ENCODE measurements at regions of chr9 and their contacts with region 1.

Region 1: DNA sequence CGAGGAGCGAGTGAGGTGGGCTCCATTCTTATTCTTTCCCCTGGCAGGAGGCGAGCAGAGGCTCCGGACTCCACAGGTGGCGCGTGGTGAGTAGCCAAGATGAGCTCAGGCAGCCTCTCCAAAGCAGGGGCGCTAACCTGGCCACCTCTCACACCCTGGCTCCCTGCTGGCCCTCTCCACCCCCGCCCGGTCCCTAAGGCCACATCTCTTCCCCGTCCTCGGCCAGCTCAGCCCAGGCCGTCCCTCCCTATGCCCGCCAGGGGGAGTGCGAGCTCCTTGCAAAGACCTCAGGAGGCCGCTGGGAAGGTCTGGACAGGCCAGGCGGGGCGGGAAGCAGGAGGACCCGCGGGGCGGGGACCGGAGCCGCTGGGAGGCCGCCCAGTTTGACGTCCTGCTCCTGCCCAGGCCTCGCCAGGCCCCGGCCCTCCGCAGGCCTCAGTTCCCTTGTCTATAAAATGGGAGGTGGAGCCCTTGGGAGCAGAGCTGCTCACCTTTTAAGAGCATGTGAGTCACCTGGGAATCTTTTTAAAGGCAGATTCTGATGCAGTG is 46.3 kb upstream of the GGTA1 start:
- DNase-seq: peak; percentile 83 to 98
- H3K4me3 ChIP-seq: peak overlapping the region; percentile 27 to 44
- H3K27ac ChIP-seq: no peak overlapping the region
- H3K4me1 ChIP-seq: peaks cover 4 to 7% of the 10 kb centered on the region in 2 donors
- H3K27me3 ChIP-seq: no peaks in the 10 kb centered on the region
- CTCF ChIP-seq: peak; percentile 95 to 96 (median 95)

Region 2: DNA sequence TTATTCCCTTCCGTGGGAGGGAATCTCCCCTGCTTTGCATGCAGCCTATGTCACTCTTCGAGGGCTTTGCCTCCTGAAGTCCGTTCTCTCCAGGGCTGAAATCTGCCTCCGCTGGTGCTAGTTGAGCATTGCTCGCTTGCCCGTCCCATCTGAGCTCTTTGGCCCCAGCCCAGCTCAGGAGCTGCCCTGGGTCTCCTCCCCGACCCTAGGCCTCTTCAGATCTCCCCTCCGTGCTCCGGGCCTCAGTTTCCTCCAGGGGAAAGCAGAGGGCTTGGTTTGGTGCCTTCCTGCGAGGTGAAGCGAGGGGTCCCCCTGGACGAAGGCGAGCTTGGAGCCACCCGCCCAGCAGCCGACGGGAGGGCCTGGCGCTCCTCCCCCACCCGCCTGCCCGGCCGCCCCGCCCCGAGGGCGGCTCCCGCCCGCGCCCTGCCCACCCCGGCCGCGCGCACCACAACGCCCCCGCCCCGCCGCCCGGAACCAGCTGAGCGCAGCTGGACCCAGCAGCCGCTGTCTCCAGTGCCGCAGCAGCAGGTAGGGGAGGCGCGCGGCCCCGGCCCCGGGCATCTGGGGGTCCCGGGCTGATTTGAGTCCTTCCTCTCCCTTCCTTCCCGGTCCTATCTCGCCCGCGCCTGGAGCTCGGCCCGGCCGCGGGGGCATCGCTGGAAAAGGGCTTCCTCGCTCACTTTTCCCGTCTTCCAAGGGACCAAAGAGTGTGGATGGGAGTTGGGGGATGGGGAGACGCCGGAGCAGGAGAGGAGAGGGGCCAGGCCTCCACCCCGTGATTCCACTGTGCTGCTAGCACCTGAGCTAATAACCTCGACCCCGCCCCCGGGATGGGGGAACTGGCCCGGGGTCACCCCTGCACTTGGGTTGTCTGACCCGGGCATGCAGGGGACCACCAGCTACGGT is 278.0 kb before region 1 on chr9 and contains the start of gene GSN:
- intact Hi-C with region 1: no loop called
- DNase-seq: peak in 1 of 2 donors; percentile 91
- H3K4me3 ChIP-seq: peak within 1 kb of the TSS; percentile 90 to 99
- H3K27ac ChIP-seq: peak within 1 kb of the TSS; percentile 98 to 99
- H3K4me1 ChIP-seq: peaks cover 23 to 36% of the 10 kb centered on the region in 2 donors
- H3K27me3 ChIP-seq: no peaks in the 10 kb centered on the region
- CTCF ChIP-seq: peak in 1 of 3 experiments; percentile 33
- total RNA-seq, gene GSN: 3,012 TPM

Region 3: DNA sequence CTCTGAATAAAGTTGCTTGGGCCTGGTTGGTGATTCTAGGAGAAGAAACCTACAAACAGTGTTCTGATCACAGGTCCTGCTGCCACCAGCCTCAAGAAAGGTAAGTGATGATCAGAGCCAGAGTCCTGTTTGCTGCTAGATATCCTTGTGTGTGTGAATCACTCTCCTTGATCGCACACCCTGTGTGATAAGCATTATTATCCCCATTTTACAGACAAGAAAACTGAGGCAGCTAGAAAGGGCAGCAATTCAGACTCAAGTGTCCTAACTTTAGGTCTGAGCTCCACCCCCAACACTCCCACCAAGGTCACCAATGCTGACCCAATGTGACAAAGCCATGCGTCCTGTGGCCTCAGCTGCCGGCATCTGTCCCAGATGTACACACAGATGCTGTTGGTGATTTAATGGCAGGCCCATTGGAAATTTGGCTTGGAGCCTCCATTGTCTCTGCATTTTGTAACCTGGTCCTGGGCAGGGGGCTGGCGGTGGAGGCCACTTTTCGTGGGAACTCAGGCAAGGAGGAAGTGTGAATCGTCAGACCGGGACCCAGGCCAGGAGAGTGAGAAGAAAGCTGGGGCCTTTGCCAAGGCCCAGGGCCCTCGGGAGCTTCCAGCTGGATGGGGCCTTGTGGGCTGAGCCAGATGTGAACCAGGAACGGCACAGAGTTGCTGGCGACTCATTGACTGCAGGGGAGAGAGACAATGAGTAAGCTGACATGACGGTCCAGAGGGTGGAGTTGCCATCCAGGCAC is 16.5 kb before region 1 on chr9:
- intact Hi-C with region 1: no loop called
- DNase-seq: peak; percentile 82 to 97
- H3K4me3 ChIP-seq: no peak overlapping the region
- H3K27ac ChIP-seq: peak overlapping the region; percentile 39 to 65
- H3K4me1 ChIP-seq: peaks cover 0 to 10% of the 10 kb centered on the region in 2 donors
- H3K27me3 ChIP-seq: no peaks in the 10 kb centered on the region
- CTCF ChIP-seq: no peak

Region 4: DNA sequence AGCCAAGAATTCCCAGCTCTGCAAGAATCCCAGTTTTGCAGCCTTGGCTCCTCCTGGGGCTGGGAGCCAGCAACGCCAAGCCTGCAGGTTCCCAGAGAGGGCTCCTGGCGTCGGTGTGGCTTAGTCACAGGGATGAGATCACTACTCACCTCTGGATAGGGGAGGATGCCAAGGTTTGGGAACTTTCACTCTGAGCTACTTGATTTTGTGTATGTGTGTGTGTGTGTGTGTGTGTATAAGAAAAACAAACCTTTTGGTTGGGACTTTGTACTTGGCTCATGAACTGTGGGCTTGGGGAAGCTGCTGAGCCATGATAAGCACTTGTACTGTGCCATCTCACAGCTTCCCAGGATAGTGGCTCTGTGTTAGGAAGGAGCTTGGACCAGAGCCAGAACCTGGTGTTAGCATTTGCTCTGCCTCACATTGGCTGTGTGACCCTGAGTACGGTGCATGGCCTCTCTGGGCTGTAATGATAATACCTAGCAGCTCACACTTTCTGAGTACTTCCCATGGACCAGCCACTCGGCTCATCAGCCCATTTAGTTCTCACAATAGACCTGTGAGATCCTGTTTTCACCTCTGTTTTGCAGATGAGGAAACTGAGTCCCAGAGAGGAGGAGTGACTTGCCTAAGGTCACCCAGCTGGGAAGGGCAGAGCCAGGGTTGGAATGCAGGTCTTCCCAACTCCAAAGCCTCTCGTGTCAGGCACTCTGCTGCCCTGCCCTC is 64.1 kb after region 1 on chr9:
- intact Hi-C with region 1: loop called (anchors 2 kb)
- DNase-seq: peak; percentile 19 to 82
- H3K4me3 ChIP-seq: no peak overlapping the region
- H3K27ac ChIP-seq: peak overlapping the region; percentile 6 to 52
- H3K4me1 ChIP-seq: peaks cover 13 to 33% of the 10 kb centered on the region in 2 donors
- H3K27me3 ChIP-seq: no peaks in the 10 kb centered on the region
- CTCF ChIP-seq: no peak

Region 5: GRCh38 chr9:121686930-121687541 is 141.1 kb after region 1 on chr9:
- intact Hi-C with region 1: loop called (anchors 1 kb)
- DNase-seq: peak; percentile 45 to 85
- H3K4me3 ChIP-seq: no peak overlapping the region
- H3K27ac ChIP-seq: no peak overlapping the region
- H3K4me1 ChIP-seq: peaks cover 0 to 2% of the 10 kb centered on the region in 2 donors
- H3K27me3 ChIP-seq: no peaks in the 10 kb centered on the region
- CTCF ChIP-seq: peak; percentile 79 to 95 (median 85)

Region 6: GRCh38 chr9:121992571-121993212 is 446.7 kb after region 1 on chr9:
- intact Hi-C with region 1: loop called (anchors 2 kb)
- DNase-seq: peak in 1 of 2 donors; percentile 76
- H3K4me3 ChIP-seq: no peak overlapping the region
- H3K27ac ChIP-seq: no peak overlapping the region
- H3K4me1 ChIP-seq: peaks cover 0 to 1% of the 10 kb centered on the region in 2 donors
- H3K27me3 ChIP-seq: no peaks in the 10 kb centered on the region
- CTCF ChIP-seq: peak; percentile 75 to 79 (median 78)

Region 7: GRCh38 chr9:122092611-122093506 is 546.9 kb after region 1 on chr9 and contains the start of gene TTLL11:
- intact Hi-C with region 1: loop called (anchors 10 kb)
- DNase-seq: peak; percentile 92 to 99
- H3K4me3 ChIP-seq: peak within 1 kb of the TSS; percentile 92
- H3K27ac ChIP-seq: peak within 1 kb of the TSS; percentile 82 to 92
- H3K4me1 ChIP-seq: peaks cover 5 to 31% of the 10 kb centered on the region in 2 donors
- H3K27me3 ChIP-seq: no peaks in the 10 kb centered on the region
- CTCF ChIP-seq: no peak
- total RNA-seq, gene TTLL11: 18.5 TPM